Naive thymus-derived CD8-positive, alpha-beta T cell (primary cell): ENCODE measurements at regions of chr19 and their contacts with region 1.

Region 1: DNA sequence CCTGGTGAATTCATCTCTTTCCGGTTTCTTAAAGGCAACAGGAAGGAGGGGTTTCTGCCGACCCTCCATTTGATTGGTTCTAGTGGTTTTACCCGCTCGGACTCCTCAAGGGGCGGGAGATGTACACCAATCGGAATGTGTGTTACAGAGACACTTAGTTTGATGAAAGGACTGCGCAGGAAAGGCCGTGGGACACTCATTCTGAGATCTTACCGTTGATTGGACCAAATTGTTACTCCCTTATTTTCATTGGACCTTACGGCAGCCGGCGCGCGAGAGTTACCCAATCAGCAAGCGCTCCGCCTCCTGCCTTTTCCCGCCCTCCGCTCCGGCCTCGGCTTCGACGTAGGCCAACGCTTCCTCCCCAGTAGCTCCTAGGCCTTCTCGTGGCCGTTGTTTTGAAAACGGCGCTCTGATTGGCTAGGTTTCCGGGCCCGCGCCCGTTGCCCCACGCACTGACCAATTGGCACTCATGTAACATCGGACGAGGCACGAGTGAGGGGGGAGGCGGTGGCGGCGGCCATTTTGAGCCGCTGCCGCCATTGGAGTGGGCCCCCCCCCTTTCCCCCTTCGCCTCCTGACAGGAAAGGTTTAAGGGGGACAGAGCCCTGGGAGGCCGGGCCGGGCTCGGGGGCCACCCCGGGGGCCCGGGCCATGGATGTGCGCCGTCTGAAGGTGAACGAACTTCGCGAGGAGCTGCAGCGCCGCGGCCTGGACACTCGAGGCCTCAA is at the start of gene HNRNPUL1:
- DNase-seq: peak; percentile 95 to 100 (median 100)
- ATAC-seq: peak; percentile 55 to 57
- H3K4me3 Mint-ChIP-seq: peak within 1 kb of the TSS; percentile 82 to 100 (median 98)
- H3K27ac Mint-ChIP-seq: peak within 1 kb of the TSS; percentile 100
- H3K4me1 Mint-ChIP-seq: peaks cover 34 to 63% (median 48%) of the 10 kb centered on the region in 4 donors
- H3K27me3 Mint-ChIP-seq: peaks cover 0 to 9% (median 0%) of the 10 kb centered on the region in 5 donors
- polyA plus RNA-seq, gene HNRNPUL1: 40.7 to 67.6 (median 46.1) TPM

Region 2: DNA sequence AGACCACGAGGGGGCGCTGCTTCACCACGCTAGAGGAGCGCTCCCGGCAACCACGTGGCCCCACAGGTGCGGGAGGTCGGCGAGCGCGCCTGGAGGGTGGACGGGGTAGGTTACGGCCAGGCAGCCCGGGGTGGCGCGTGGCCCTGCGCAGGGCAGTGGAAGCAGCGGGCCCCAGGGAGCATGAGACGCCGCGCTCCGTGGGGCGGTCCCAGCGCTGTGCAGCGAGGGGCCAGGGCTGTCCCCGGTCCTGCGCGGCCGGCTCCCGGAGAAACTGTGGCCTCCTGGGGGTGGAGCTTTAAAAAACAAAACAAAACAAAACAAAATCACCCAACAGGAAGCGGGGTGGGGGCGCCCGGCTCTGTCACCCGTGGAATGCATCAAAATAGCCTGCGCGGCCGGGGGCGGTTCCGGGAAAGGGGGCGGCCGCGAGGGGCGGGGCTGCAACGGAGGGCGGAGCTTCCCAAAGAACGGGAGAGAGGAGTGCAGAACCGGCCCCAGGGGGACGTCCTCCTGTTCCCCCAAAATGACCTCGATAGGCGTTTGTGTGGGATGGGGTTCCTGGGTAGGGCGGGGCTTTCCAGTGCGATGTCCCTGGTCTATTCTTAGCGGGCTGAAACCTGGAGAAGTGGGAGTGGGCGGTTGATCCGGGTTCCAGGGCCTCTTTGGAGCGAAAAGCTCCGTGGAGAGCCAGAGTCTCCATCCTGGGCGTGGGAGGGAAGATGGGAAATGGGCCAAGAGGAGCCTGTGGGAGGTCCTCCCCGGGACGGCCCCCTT is 600.9 kb before region 1 on chr19:
- POLR2A ChIA-PET with region 1: interaction called, 20 read pairs
- DNase-seq: peak; percentile 81 to 98 (median 92)
- ATAC-seq: peak; percentile 91 to 92
- H3K4me3 Mint-ChIP-seq: peak overlapping the region; percentile 76 to 91 (median 84)
- H3K27ac Mint-ChIP-seq: peak overlapping the region; percentile 63 to 93 (median 90)
- H3K4me1 Mint-ChIP-seq: peaks cover 6 to 15% (median 8%) of the 10 kb centered on the region in 4 donors
- H3K27me3 Mint-ChIP-seq: no peaks in the 10 kb centered on the region

Region 3: DNA sequence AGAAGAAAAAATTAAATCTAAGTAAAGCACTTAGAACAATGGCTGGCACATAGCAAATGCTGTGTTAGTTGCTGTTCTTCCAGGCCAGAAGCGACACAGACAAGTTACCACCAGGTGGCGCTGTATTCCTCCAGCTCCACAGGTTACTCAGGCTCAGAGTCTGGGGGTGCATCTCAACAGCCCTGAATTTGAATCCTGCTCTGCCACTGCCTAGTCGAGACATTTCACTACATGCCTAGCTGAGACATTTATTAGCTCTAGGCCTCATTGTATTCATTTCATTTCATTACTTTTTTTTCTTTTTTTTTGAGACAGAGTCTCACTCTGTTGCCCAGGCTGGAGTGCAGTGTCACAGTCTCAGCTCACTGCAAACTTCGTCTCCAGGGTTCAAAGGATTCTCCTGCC is 289.4 kb before region 1 on chr19:
- POLR2A ChIA-PET with region 1: interaction called, 11 read pairs
- DNase-seq: peak; percentile 61 to 87 (median 78)
- ATAC-seq: peak; percentile 69 to 74
- H3K4me3 Mint-ChIP-seq: no peak overlapping the region
- H3K27ac Mint-ChIP-seq: peak overlapping the region in 4 of 10 donors; percentile 62 to 87 (median 82)
- H3K4me1 Mint-ChIP-seq: peaks cover 18 to 36% (median 28%) of the 10 kb centered on the region in 4 donors
- H3K27me3 Mint-ChIP-seq: peaks cover 1 to 10% (median 5%) of the 10 kb centered on the region in 5 donors

Region 4: DNA sequence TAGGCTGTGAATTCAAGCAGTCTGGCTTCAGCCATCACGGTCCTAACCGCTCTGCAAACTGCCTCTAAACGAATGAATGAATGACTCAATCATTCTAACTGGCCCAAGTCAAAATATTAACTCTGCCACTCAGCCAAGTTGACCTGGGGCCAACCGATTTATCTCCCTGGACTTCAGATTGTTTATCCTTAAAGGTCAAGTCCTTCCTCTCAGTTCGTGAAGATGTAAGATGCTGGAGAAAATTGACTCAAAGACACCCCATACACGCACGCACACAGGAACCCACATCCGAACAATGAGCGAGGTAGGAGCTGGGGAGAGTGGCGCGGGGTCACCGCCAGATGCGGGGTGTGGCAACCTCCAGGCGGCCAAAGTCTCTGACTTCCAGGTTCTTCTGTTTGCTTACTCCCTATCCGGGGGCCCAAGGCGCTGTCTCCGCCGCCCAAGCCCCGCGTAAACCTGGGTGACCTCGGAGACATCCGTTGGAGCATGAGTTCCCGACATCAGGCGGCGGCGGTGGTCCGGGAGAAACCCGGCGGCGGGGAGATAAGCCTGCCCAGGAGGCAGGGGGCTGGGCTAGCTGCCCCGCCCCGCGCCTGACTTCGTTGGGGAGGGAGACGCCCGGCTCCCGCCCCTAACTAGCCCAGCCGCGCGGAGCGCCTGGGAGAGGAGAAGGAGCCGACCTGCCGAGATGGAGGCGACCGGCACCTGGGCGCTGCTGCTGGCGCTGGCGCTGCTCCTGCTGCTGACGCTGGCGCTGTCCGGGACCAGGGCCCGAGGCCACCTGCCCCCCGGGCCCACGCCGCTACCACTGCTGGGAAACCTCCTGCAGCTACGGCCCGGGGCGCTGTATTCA is 71.2 kb before region 1 on chr19 and contains the start of gene CYP2S1:
- POLR2A ChIA-PET with region 1: no interaction called
- DNase-seq: peak in 2 of 10 donors; percentile 14 to 21
- ATAC-seq: peak; percentile 68 to 72
- H3K4me3 Mint-ChIP-seq: peak within 1 kb of the TSS in 9 of 10 donors; percentile 19 to 72 (median 52)
- H3K27ac Mint-ChIP-seq: peak within 1 kb of the TSS in 3 of 10 donors; percentile 60 to 85 (median 81)
- H3K4me1 Mint-ChIP-seq: peaks cover 11 to 22% (median 15%) of the 10 kb centered on the region in 4 donors
- H3K27me3 Mint-ChIP-seq: peaks cover 28 to 78% (median 38%) of the 10 kb centered on the region in 5 donors
- polyA plus RNA-seq, gene CYP2S1: not detected

Region 5: DNA sequence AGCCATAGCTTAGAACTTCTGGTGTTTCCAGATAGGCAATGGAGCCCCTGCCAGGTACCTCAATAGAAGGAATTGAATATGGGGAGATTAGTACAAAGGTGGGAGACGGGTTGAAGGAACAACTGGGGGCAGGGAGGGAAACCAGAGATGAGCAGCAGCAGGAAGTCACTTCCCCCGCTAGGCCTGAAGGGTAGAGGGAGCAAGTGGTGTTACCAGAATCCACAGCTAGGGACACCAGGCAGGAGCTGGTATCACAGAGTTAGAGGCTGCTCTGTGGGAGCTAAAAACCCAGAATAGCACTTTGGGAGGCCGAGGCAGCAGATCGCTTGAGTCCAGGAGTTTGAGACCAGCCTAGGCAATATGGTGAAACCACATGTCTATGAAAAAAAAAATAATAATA is 15.1 kb before region 1 on chr19:
- POLR2A ChIA-PET with region 1: interaction called, 10 read pairs
- DNase-seq: no peak
- ATAC-seq: no peak
- H3K4me3 Mint-ChIP-seq: no peak overlapping the region
- H3K27ac Mint-ChIP-seq: peak overlapping the region in 1 of 10 donors; percentile 14
- H3K4me1 Mint-ChIP-seq: no peaks in the 10 kb centered on the region
- H3K27me3 Mint-ChIP-seq: peaks cover 0 to 15% (median 0%) of the 10 kb centered on the region in 5 donors

Region 6: GRCh38 chr19:41310033-41310758 is 46.2 kb after region 1 on chr19 and contains the start of gene CCDC97:
- POLR2A ChIA-PET with region 1: interaction called, 300 read pairs
- DNase-seq: peak; percentile 82 to 97 (median 90)
- ATAC-seq: peak; percentile 67 to 69
- H3K4me3 Mint-ChIP-seq: peak within 1 kb of the TSS; percentile 93 to 99 (median 97)
- H3K27ac Mint-ChIP-seq: peak within 1 kb of the TSS; percentile 94 to 100 (median 99)
- H3K4me1 Mint-ChIP-seq: peaks cover 34 to 86% (median 82%) of the 10 kb centered on the region in 4 donors
- H3K27me3 Mint-ChIP-seq: peaks cover 0 to 3% (median 0%) of the 10 kb centered on the region in 5 donors
- polyA plus RNA-seq, gene CCDC97: 15.6 to 25.0 (median 24.6) TPM

Region 7: DNA sequence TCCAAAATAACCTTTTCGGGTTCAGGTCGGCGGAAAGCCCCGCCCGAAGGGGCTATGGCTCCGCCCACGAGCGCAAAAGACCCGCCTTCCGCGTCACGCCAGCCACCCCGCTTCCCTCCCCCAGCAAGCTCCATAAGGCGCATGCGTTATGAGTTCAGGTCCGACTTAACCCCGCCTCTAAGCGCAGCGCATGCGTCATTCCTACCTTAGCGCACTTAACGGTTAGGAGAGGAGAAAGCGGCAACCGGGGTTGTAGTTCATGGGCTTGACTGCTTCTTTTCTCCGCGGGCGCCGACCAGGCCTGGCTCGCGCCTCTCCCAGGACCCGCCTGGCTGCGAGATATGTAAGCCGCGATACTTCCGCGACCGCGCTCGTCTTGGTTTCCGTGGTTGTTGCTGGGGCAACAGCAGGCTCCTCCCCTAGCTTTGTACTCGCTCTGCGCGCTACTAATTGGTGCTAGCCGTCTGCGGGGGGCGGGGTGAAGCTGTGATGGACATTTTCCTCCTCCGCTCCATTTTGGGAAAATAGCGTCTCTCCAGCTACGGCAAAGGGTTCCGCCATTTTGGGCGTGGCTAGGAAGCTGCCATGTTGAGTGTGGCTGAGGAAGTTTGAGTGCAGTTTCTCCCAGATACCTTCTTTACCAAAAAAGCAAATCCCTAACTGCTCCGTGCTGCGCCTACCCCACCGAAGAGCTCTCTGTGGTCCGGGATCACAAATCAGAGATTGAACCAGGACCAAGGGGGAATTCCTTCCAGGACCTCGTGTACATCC is 99.9 kb after region 1 on chr19 and contains the start of gene B9D2:
- POLR2A ChIA-PET with region 1: interaction called, 49 read pairs
- DNase-seq: peak; percentile 91 to 100 (median 98)
- ATAC-seq: peak; percentile 93 to 94
- H3K4me3 Mint-ChIP-seq: peak within 1 kb of the TSS; percentile 89 to 97 (median 94)
- H3K27ac Mint-ChIP-seq: peak within 1 kb of the TSS; percentile 99 to 100 (median 100)
- H3K4me1 Mint-ChIP-seq: peaks cover 12 to 57% (median 40%) of the 10 kb centered on the region in 4 donors
- H3K27me3 Mint-ChIP-seq: no peaks in the 10 kb centered on the region
- polyA plus RNA-seq, gene B9D2: 12.6 to 20.9 (median 19.8) TPM